ENCODE measurements at regions of chr1 and their contacts with region 1.

Region 1: GRCh38 chr1:34984793-34985608 is at the start of gene TMEM35B:
- DNase-seq: peak; percentile 79 to 86 (median 81)
- ATAC-seq: peak; percentile 95
- H3K4me3 ChIP-seq: peak within 1 kb of the TSS; percentile 53
- H3K27ac ChIP-seq: peak within 1 kb of the TSS; percentile 74
- H3K4me1 ChIP-seq: peaks cover 6 to 8% of the 10 kb centered on the region in 2 experiments; a peak in 4 of 5 replicates
- H3K27me3 ChIP-seq: no peaks in the 10 kb centered on the region
- CTCF ChIP-seq: 0 out of 6 replicates have a peak, but pooled peaks of 1 of the 3 experiments have one; percentile 19
- EP300 ChIP-seq: no peak
- POLR2A ChIP-seq: peak; percentile 87
- RAD21 ChIP-seq: no peak; a peak in 1 of 4 replicates
- polyA plus RNA-seq, gene TMEM35B: 123 to 142 TPM

Region 2: GRCh38 chr1:34763142-34763781 is 221.7 kb before region 1 on chr1:
- CTCF ChIA-PET with region 1: no interaction called
- POLR2A ChIA-PET with region 1: no interaction called
- in situ Hi-C with region 1: no loop called
- intact Hi-C with region 1: no loop called
- DNase-seq: no peak
- ATAC-seq: no peak
- H3K4me3 ChIP-seq: no peak overlapping the region
- H3K27ac ChIP-seq: no peak overlapping the region
- H3K4me1 ChIP-seq: peaks cover 0 to 4% of the 10 kb centered on the region in 2 experiments; a peak in 1 of 5 replicates
- H3K27me3 ChIP-seq: peaks cover 20 to 48% of the 10 kb centered on the region in 2 experiments; a peak in 4 of 5 replicates
- CTCF ChIP-seq: no peak
- EP300 ChIP-seq: no peak
- POLR2A ChIP-seq: no peak
- RAD21 ChIP-seq: no peak

Region 3: GRCh38 chr1:34965597-34965996 is 19.4 kb before region 1 on chr1:
- CTCF ChIA-PET with region 1: no interaction called
- POLR2A ChIA-PET with region 1: interaction called, 28 read pairs
- in situ Hi-C with region 1: no loop called
- intact Hi-C with region 1: no loop called
- DNase-seq: no peak
- ATAC-seq: no peak
- H3K4me3 ChIP-seq: no peak overlapping the region
- H3K27ac ChIP-seq: no peak overlapping the region
- H3K4me1 ChIP-seq: no peaks in the 10 kb centered on the region
- H3K27me3 ChIP-seq: peaks cover 11 to 14% of the 10 kb centered on the region in 2 experiments; a peak in 4 of 5 replicates
- CTCF ChIP-seq: no peak
- EP300 ChIP-seq: no peak
- POLR2A ChIP-seq: no peak
- RAD21 ChIP-seq: no peak

Region 4: GRCh38 chr1:34970829-34971228 is 14.2 kb before region 1 on chr1:
- CTCF ChIA-PET with region 1: no interaction called
- POLR2A ChIA-PET with region 1: interaction called, 28 read pairs
- in situ Hi-C with region 1: no loop called
- intact Hi-C with region 1: no loop called
- DNase-seq: peak in 1 of 4 experiments; percentile 18
- ATAC-seq: peak; percentile 65; the same call in 2 of the 3 replicates
- H3K4me3 ChIP-seq: no peak overlapping the region
- H3K27ac ChIP-seq: no peak overlapping the region
- H3K4me1 ChIP-seq: peaks cover 0 to 4% of the 10 kb centered on the region in 2 experiments; a peak in 2 of 5 replicates
- H3K27me3 ChIP-seq: 0 out of 5 replicates have a peak, but pooled peaks cover 2 to 14% of the 10 kb centered on the region in 2 experiments
- CTCF ChIP-seq: no peak
- EP300 ChIP-seq: no peak
- POLR2A ChIP-seq: no peak
- RAD21 ChIP-seq: no peak

Region 5: DNA sequence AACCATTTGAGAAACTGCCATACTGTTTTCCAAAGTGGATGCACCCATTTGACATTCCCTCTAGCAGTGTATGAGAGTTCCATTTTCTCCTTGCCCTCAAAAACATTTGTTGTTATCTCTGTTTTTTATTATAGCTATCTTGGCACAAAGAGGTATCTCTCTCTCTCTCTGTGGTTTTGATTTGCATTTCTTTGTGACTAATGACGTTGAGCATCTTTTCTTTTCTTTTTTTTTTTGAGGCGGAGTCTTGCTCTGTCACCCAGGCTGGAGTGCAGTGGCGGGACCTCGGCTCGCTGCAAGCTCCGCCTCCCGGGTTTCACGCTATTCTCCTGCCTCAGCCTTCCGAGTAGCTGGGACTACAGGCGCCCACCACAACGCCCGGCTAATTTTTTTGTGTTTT is 64.1 kb after region 1 on chr1:
- CTCF ChIA-PET with region 1: no interaction called
- POLR2A ChIA-PET with region 1: no interaction called
- in situ Hi-C with region 1: no loop called
- intact Hi-C with region 1: no loop called
- DNase-seq: no peak
- ATAC-seq: no peak
- H3K4me3 ChIP-seq: no peak overlapping the region
- H3K27ac ChIP-seq: no peak overlapping the region
- H3K4me1 ChIP-seq: no peaks in the 10 kb centered on the region; a peak in 1 of 5 replicates
- H3K27me3 ChIP-seq: peaks cover 7 to 8% of the 10 kb centered on the region in 2 experiments; a peak in 4 of 5 replicates
- CTCF ChIP-seq: no peak
- EP300 ChIP-seq: no peak
- POLR2A ChIP-seq: no peak
- RAD21 ChIP-seq: no peak